MCF 10A (cell line): ENCODE measurements at regions of chr2 and their contacts with region 1.

Region 1: GRCh38 chr2:175181104-175181876 is at the start of gene ATP5MC3:
- DNase-seq: peak; percentile 97
- H3K4me3 Mint-ChIP-seq: peak within 1 kb of the TSS; percentile 93
- H3K27ac Mint-ChIP-seq: peak within 1 kb of the TSS; percentile 96
- H3K4me1 Mint-ChIP-seq: peaks cover 19% of the 10 kb centered on the region
- H3K27me3 Mint-ChIP-seq: no peaks in the 10 kb centered on the region
- CTCF ChIP-seq: peak; percentile 18
- total RNA-seq, gene ATP5MC3: 256 and 277 TPM in 2 replicates

Region 2: DNA sequence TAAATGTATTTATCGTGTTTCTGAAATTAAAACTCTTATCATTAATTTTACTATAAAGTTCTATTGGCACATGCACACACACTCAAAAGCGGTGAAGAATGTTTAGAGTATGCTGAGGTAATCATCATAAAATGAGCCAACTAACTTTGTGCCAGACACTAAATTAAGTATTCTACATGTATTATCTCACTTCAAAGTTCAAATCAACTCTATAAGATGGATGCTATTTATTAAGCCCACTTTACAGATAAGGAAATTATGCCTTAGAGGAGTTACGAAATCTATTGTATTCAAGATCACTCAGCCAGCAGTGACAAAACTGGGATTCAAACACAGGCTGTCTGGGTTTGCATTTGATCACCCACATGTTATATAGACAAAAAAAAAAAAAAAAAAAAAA is 957.9 kb before region 1 on chr2:
- CTCF ChIA-PET with region 1: no interaction called
- POLR2A ChIA-PET with region 1: no interaction called
- intact Hi-C with region 1: no loop called
- DNase-seq: no peak
- H3K4me3 Mint-ChIP-seq: no peak overlapping the region
- H3K27ac Mint-ChIP-seq: no peak overlapping the region
- H3K4me1 Mint-ChIP-seq: peaks cover 11% of the 10 kb centered on the region
- H3K27me3 Mint-ChIP-seq: no peaks in the 10 kb centered on the region
- CTCF ChIP-seq: no peak

Region 3: DNA sequence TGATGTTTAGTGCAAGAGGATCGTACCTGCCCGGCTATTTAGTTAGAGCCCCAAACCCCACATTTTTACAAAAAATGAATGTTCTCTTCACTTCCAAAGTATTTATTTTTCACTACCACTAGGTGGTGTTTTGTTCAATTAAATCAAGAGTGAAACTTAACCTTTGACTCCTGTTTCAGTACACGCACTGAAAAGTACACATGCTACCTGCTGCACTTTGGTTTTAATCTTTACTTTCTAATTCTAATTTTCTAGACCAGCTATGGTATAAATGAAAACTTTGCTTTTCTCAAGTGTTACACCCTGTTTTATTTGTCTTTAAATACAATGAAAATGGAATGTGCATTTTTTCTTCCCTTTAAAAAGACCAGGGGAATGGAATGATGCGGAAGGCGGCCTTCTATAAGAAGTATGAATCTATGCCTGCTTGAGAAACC is 144.7 kb before region 1 on chr2:
- CTCF ChIA-PET with region 1: no interaction called
- POLR2A ChIA-PET with region 1: no interaction called
- intact Hi-C with region 1: loop called (anchors 5 kb)
- DNase-seq: peak; percentile 45
- H3K4me3 Mint-ChIP-seq: no peak overlapping the region
- H3K27ac Mint-ChIP-seq: no peak overlapping the region
- H3K4me1 Mint-ChIP-seq: no peaks in the 10 kb centered on the region
- H3K27me3 Mint-ChIP-seq: no peaks in the 10 kb centered on the region
- CTCF ChIP-seq: peak; percentile 51

Region 4: DNA sequence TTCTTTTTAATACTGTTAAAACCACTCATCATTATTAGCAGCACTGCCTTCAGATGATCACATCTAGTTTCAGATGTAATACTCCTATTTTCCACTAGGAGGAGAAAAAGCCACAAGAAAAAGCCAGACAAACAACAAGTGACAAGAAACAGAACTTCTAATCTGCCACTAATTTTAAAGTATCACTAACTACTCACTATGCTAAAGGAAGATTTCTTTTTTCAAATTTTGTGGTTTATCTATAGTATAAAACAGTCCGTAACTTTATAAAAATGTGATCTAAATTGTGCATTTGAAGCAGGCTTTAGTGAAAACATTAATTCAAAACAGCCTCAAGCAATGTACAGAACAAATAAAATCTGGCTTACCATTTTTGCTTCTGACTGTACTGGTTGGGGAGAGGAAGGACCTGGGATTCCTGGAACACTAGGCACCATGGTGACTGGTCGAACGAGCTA is 70.1 kb before region 1 on chr2:
- CTCF ChIA-PET with region 1: interaction called, 3 read pairs
- POLR2A ChIA-PET with region 1: interaction called, 4 read pairs
- intact Hi-C with region 1: loop called (anchors 2 kb)
- DNase-seq: peak; percentile 57
- H3K4me3 Mint-ChIP-seq: no peak overlapping the region
- H3K27ac Mint-ChIP-seq: no peak overlapping the region
- H3K4me1 Mint-ChIP-seq: no peaks in the 10 kb centered on the region
- H3K27me3 Mint-ChIP-seq: no peaks in the 10 kb centered on the region
- CTCF ChIP-seq: peak; percentile 58